ENCODE measurements at regions of chr6 and their contacts with region 1.

Region 1: GRCh38 chr6:158769771-158770432 is 49.3 kb downstream of the EZR start:
- DNase-seq: no peak
- H3K4me3 ChIP-seq: no peak overlapping the region
- H3K27ac ChIP-seq: peak overlapping the region; percentile 86
- H3K4me1 ChIP-seq: peaks cover 40% of the 10 kb centered on the region
- H3K27me3 ChIP-seq: no peaks in the 10 kb centered on the region
- CTCF ChIP-seq: no peak

Region 2: DNA sequence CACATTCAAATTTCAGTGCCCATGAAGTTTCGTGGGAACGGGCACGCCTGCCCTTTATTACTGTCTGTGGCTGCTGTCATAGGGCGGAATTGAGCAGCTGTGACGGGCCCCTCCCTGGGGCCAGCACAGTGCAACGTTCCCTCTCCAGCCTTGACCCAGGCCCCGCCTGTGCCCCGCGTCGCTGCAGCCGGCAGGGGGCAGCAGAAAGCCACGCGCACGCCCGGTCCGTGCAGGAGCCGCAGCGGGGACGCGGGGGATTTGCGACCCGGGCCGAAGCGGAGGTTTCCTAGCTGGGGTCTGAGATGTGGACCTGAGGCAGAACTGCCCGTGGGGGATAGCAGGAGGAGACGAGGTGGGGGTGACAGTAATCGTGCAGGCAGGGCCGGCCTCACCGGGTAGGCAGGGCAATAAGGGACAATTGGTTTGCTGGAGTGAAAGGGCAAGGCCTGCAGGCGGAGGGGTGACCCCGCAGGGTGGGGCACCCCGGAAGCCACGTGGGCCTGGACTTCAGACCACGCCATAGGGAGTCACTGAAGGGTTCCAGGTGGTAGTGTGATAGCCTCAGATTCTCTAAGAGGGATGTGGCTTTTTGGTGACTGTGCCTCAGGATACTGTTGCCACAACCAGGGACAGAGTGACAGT is 65.6 kb before region 1 on chr6:
- CTCF ChIA-PET with region 1: no interaction called
- POLR2A ChIA-PET with region 1: no interaction called
- intact Hi-C with region 1: loop called (anchors 10 kb)
- DNase-seq: peak; percentile 81 to 88
- H3K4me3 ChIP-seq: peak overlapping the region; percentile 46; the same call in 1 of the 2 replicates
- H3K27ac ChIP-seq: peak overlapping the region; percentile 94
- H3K4me1 ChIP-seq: peaks cover 54% of the 10 kb centered on the region
- H3K27me3 ChIP-seq: no peaks in the 10 kb centered on the region
- CTCF ChIP-seq: peak; percentile 98

Region 3: GRCh38 chr6:158819213-158819909 is 49.5 kb after region 1 on chr6 and contains the start of gene EZR:
- CTCF ChIA-PET with region 1: no interaction called
- POLR2A ChIA-PET with region 1: no interaction called
- intact Hi-C with region 1: loop called (anchors 2 kb)
- DNase-seq: peak; percentile 63 to 75
- H3K4me3 ChIP-seq: peak within 1 kb of the TSS; percentile 86
- H3K27ac ChIP-seq: peak within 1 kb of the TSS; percentile 92
- H3K4me1 ChIP-seq: peaks cover 30% of the 10 kb centered on the region
- H3K27me3 ChIP-seq: no peaks in the 10 kb centered on the region
- CTCF ChIP-seq: peak; percentile 37; the same call in 1 of the 2 replicates
- total RNA-seq, gene EZR: 231 and 240 TPM in 2 replicates

Region 4: GRCh38 chr6:158869826-158870648 is 100.1 kb after region 1 on chr6:
- CTCF ChIA-PET with region 1: no interaction called
- POLR2A ChIA-PET with region 1: no interaction called
- intact Hi-C with region 1: loop called (anchors 2 kb)
- DNase-seq: peak; percentile 87 to 99
- H3K4me3 ChIP-seq: peak overlapping the region; percentile 52
- H3K27ac ChIP-seq: peak overlapping the region; percentile 98
- H3K4me1 ChIP-seq: peaks cover 48% of the 10 kb centered on the region
- H3K27me3 ChIP-seq: no peaks in the 10 kb centered on the region
- CTCF ChIP-seq: peak; percentile 33; the same call in 1 of the 2 replicates

Region 5: GRCh38 chr6:158972241-158973233 is 202.6 kb after region 1 on chr6:
- CTCF ChIA-PET with region 1: no interaction called
- POLR2A ChIA-PET with region 1: no interaction called
- intact Hi-C with region 1: loop called (anchors 5 kb)
- DNase-seq: peak; percentile 4 to 60
- H3K4me3 ChIP-seq: no peak overlapping the region
- H3K27ac ChIP-seq: peak overlapping the region; percentile 42
- H3K4me1 ChIP-seq: peaks cover 6% of the 10 kb centered on the region
- H3K27me3 ChIP-seq: no peaks in the 10 kb centered on the region
- CTCF ChIP-seq: peak; percentile 82

Measured in PC-9 (cell line).